Esophagus muscularis mucosa (tissue), 4 donors: ENCODE measurements at regions of chr5 and their contacts with region 1.

Region 1: DNA sequence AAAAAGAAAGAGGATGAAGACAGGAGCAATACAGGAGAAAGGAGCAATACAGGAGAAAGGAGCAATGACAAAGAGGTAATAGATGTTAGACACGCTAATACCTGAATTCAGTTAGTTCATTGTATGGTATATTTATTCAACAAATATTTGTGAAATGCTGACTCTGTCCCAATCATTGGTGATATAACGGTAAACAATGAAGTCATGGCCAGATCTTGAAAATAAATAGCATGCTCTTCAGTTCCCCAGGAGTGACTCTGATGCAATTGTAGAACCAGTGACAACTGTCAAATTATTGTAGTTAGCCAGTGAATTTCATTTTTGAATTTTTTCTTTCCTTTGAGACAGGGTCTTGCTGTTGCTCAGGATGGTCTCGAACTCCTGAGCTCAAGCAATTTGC is 48.0 kb upstream of the SPINK14 start:
- DNase-seq: no peak
- H3K4me3 ChIP-seq: no peak overlapping the region
- H3K27ac ChIP-seq: no peak overlapping the region
- H3K4me1 ChIP-seq: no peaks in the 10 kb centered on the region
- H3K27me3 ChIP-seq: no peaks in the 10 kb centered on the region
- CTCF ChIP-seq: no peak
- EP300 ChIP-seq: no peak
- POLR2A ChIP-seq: no peak

Region 2: DNA sequence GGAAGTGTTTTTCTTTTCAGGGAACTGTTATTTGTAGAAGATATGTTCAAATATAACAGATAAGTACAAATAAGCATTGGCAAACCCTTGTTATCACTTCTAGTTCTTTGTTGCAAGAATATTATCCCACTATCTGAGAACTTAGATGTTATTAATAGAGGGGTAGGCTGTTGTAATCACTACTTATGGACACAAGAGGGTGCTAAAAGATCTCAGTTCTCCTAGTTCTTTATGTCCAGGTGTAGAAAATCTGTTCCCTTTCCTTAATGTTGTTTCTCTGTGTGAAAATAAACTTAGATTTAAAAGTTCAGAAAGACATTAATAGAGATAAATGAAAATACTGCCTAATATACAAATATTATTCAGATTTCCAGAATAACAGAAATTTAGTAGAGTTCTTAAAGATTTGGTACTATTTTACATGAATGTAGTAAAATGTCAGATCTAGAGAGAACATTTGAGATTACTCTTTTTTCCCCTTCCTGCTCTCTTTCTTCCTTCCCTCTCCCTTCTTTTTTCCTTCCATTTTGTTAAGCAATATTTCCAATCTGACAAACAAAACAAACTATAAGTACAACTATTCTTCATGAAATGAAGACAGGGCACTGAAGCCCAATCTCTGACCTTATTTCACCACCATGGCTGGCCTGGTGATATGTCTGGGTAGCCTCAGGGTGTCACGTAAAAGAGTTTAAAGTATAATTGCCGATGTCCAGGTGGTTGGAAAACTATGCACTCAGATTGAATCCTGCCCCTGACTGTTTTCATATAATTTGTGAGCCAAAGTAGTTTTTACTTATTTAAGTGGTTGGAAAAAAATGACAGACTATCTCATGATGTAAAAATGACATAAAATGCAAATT is 170.4 kb before region 1 on chr5:
- intact Hi-C with region 1: loop called (anchors 5 kb)
- DNase-seq: no peak
- H3K4me3 ChIP-seq: no peak overlapping the region
- H3K27ac ChIP-seq: no peak overlapping the region
- H3K4me1 ChIP-seq: no peaks in the 10 kb centered on the region
- H3K27me3 ChIP-seq: no peaks in the 10 kb centered on the region
- CTCF ChIP-seq: peak; percentile 57 to 65 (median 58)
- EP300 ChIP-seq: no peak
- POLR2A ChIP-seq: no peak

Region 3: GRCh38 chr5:148090773-148091221 is 29.5 kb before region 1 on chr5:
- intact Hi-C with region 1: no loop called
- DNase-seq: no peak
- H3K4me3 ChIP-seq: no peak overlapping the region
- H3K27ac ChIP-seq: no peak overlapping the region
- H3K4me1 ChIP-seq: peaks cover 3 to 15% (median 11%) of the 10 kb centered on the region in 4 donors
- H3K27me3 ChIP-seq: no peaks in the 10 kb centered on the region
- CTCF ChIP-seq: no peak
- EP300 ChIP-seq: no peak
- POLR2A ChIP-seq: no peak